ENCODE measurements at regions of chr19 and their contacts with region 1.

Region 1: DNA sequence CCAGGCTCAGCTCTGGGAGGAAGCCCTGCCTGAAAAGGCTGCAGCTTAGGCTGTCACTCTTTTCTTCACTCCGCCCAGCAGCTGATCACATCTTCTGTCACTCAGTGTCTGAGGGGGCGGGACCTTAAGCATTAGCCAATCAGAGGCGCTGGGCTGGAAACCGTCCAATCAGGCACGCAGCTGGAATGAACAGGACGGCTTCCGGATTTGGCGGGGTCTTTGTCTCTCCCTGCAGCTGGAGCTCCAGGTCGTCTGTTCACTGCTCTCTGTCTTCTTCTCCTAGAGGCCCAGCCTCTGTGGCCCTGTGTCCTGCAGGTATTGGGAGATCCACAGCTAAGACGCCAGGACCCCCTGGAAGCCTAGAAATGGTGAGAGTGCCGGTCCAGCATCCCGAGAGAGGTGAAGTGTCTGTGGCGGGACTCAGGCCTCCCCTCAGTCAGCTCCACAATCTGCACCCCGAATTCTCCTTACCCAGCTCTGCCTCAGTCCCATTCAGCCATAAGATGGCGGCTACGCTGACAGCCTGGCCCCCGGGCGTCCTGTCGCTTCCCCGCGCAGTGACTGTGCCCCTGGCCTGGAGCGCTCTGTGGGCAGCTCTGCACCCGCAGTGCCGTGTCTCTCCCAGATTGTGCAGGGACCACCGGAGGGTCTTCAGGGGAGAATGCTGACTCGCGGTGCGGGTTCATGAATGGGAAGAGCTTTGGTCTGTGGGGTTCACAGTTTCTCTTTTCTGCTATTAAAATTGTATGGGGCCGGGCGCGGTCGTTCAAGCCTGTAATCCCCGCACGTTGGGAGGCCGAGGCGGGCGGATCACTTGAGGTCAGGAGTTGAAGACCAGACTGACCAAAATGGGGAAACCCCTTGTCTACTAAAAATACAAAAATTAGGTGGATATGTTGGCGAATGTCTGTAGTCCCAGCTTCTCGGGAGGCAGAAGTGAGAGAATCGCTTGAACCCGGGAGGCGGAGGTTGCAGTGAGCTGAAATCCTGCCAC is at the start of gene ZNF66:
- DNase-seq: peak; percentile 95 to 96
- H3K4me3 ChIP-seq: peak within 1 kb of the TSS; percentile 78 to 95 (median 93)
- H3K27ac ChIP-seq: peak within 1 kb of the TSS; percentile 84
- H3K4me1 ChIP-seq: no peaks in the 10 kb centered on the region
- H3K27me3 ChIP-seq: no peaks in the 10 kb centered on the region
- CTCF ChIP-seq: no peak
- EP300 ChIP-seq: no peak
- POLR2A ChIP-seq: peak; percentile 93 to 98
- RAD21 ChIP-seq: no peak
- total RNA-seq, gene ZNF66: 53.5 and 59.7 TPM in 2 replicates

Region 2: GRCh38 chr19:20661150-20661819 is 115.1 kb before region 1 on chr19 and contains the start of gene ZNF626:
- CTCF ChIA-PET with region 1: no interaction called
- POLR2A ChIA-PET with region 1: interaction called, 17 read pairs
- DNase-seq: peak; percentile 91 to 95
- H3K4me3 ChIP-seq: peak within 1 kb of the TSS; percentile 91 to 99 (median 97)
- H3K27ac ChIP-seq: peak within 1 kb of the TSS; percentile 98
- H3K4me1 ChIP-seq: peaks cover 0 to 10% (median 3%) of the 10 kb centered on the region in 4 experiments; a peak in 4 of 7 replicates
- H3K27me3 ChIP-seq: no peaks in the 10 kb centered on the region
- CTCF ChIP-seq: no peak
- EP300 ChIP-seq: no peak
- POLR2A ChIP-seq: peak; percentile 57 to 91
- RAD21 ChIP-seq: no peak
- total RNA-seq, gene ZNF626: 25.1 and 28.4 TPM in 2 replicates

Region 3: DNA sequence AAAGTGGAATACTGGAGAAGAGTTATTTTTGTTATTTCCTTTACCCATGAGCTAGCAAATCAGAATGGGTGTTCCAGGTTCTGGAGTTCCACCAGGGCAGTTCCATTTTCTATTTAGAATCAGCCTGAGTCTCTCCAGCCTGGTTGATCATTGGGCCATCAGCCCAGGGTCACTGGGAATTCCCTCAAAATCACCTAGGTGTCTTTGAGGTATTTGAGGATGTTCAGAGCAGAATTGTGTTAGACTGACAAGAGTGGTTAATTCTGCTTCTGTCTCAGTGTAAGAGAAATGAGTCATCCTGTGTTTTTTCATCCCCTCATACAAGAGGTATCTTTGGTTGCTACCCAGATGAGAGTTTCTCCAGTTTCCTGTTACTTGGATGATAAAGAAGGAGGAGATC is 11.4 kb after region 1 on chr19:
- CTCF ChIA-PET with region 1: no interaction called
- POLR2A ChIA-PET with region 1: interaction called, 18 read pairs
- DNase-seq: no peak
- H3K4me3 ChIP-seq: no peak overlapping the region
- H3K27ac ChIP-seq: no peak overlapping the region
- H3K4me1 ChIP-seq: no peaks in the 10 kb centered on the region
- H3K27me3 ChIP-seq: no peaks in the 10 kb centered on the region
- CTCF ChIP-seq: no peak
- EP300 ChIP-seq: no peak
- POLR2A ChIP-seq: no peak
- RAD21 ChIP-seq: no peak

Region 4: DNA sequence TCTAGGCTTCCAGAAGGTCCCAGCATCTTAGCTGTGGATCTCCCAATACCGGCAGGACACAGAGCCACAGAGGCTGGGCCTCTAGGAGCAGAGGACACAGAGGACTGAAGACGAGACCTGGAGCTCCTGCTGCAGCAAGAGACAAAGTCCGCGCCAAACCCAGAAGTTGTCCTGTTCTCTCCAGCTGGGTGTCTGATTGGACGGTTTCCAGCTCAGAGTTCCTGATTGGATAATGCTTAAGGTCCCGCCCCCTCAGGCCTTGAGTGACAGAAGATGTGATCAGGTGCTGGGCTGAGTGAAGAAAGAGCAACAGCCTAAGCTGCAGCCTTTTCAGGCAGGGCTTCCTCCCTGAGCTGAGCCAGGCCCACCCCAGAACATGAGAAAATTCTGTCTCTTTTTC is 86.8 kb after region 1 on chr19:
- CTCF ChIA-PET with region 1: no interaction called
- POLR2A ChIA-PET with region 1: no interaction called
- DNase-seq: peak in 1 of 2 experiments; percentile 40
- H3K4me3 ChIP-seq: no peak overlapping the region
- H3K27ac ChIP-seq: no peak overlapping the region
- H3K4me1 ChIP-seq: no peaks in the 10 kb centered on the region
- H3K27me3 ChIP-seq: no peaks in the 10 kb centered on the region
- CTCF ChIP-seq: no peak
- EP300 ChIP-seq: no peak
- POLR2A ChIP-seq: no peak
- RAD21 ChIP-seq: no peak

Measured in H1 (cell line).